Posterior vena cava (tissue), 2 donors: ENCODE measurements at regions of chr5 and their contacts with region 1.

Region 1: GRCh38 chr5:140664359-140665119 is at the start of gene WDR55:
- DNase-seq: peak; percentile 99
- total RNA-seq, gene WDR55: 13.0 to 14.9 TPM

Region 2: GRCh38 chr5:140391312-140391711 is 273.2 kb before region 1 on chr5:
- intact Hi-C with region 1: no loop called
- DNase-seq: no peak

Region 3: GRCh38 chr5:140595538-140596300 is 68.8 kb before region 1 on chr5:
- intact Hi-C with region 1: no loop called
- DNase-seq: no peak

Region 4: DNA sequence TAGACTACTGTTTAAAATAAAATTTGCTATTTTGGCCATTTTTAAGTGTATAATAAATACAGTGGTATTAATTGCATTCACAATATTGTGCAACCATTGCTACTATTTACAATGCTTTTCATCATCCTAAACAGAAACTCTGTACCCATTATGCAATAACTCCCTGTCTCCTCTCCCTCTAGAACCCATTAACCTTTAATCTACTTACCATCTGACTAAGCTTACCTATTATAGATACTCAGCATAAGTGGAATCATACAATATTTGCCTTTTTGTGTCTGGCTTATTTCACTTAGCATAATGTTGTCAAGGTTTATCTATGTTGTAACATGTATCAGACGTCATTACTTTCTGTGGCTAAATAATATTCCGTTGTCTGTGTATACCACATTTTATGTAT is 57.5 kb before region 1 on chr5:
- intact Hi-C with region 1: no loop called
- DNase-seq: no peak

Region 5: GRCh38 chr5:140690941-140691924 is 26.7 kb after region 1 on chr5 and contains the starts of genes HARS1 and HARS2:
- intact Hi-C with region 1: loop called in 1 of 2 experiments (anchors 2 kb)
- DNase-seq: peak; percentile 97
- total RNA-seq, gene HARS1: 38.0 to 48.2 TPM
- total RNA-seq, gene HARS2: 16.8 to 19.2 TPM